ENCODE measurements at regions of chr1 and their contacts with region 1.

Region 1: GRCh38 chr1:86380257-86380861 is 15.8 kb downstream of the ODF2L start:
- DNase-seq: peak; percentile 73
- H3K4me3 Mint-ChIP-seq: no peak overlapping the region
- H3K27ac Mint-ChIP-seq: no peak overlapping the region
- H3K4me1 Mint-ChIP-seq: no peaks in the 10 kb centered on the region
- H3K27me3 Mint-ChIP-seq: no peaks in the 10 kb centered on the region
- CTCF ChIP-seq: peak; percentile 82

Region 2: GRCh38 chr1:86395771-86396497 is 15.6 kb after region 1 on chr1 and contains the start of gene ODF2L:
- CTCF ChIA-PET with region 1: interaction called, 8 read pairs
- POLR2A ChIA-PET with region 1: interaction called, 51 read pairs
- intact Hi-C with region 1: no loop called
- DNase-seq: peak; percentile 90
- H3K4me3 Mint-ChIP-seq: peak within 1 kb of the TSS; percentile 94
- H3K27ac Mint-ChIP-seq: peak within 1 kb of the TSS; percentile 98
- H3K4me1 Mint-ChIP-seq: peaks cover 13% of the 10 kb centered on the region
- H3K27me3 Mint-ChIP-seq: no peaks in the 10 kb centered on the region
- CTCF ChIP-seq: no peak
- total RNA-seq, gene ODF2L: 35.5 and 39.0 TPM in 2 replicates

Region 3: GRCh38 chr1:86429835-86430234 is 49.5 kb after region 1 on chr1:
- CTCF ChIA-PET with region 1: interaction called, 11 read pairs
- POLR2A ChIA-PET with region 1: interaction called, 40 read pairs
- intact Hi-C with region 1: no loop called
- DNase-seq: peak; percentile 96
- H3K4me3 Mint-ChIP-seq: no peak overlapping the region
- H3K27ac Mint-ChIP-seq: no peak overlapping the region
- H3K4me1 Mint-ChIP-seq: peaks cover 13% of the 10 kb centered on the region
- H3K27me3 Mint-ChIP-seq: no peaks in the 10 kb centered on the region
- CTCF ChIP-seq: no peak

Region 4: GRCh38 chr1:86507935-86508582 is 127.7 kb after region 1 on chr1:
- CTCF ChIA-PET with region 1: interaction called, 15 read pairs
- POLR2A ChIA-PET with region 1: no interaction called
- intact Hi-C with region 1: no loop called
- DNase-seq: peak; percentile 40
- H3K4me3 Mint-ChIP-seq: no peak overlapping the region
- H3K27ac Mint-ChIP-seq: no peak overlapping the region
- H3K4me1 Mint-ChIP-seq: no peaks in the 10 kb centered on the region
- H3K27me3 Mint-ChIP-seq: no peaks in the 10 kb centered on the region
- CTCF ChIP-seq: peak; percentile 45

Region 5: GRCh38 chr1:86696522-86696921 is 316.2 kb after region 1 on chr1:
- CTCF ChIA-PET with region 1: no interaction called
- POLR2A ChIA-PET with region 1: interaction called, 3 read pairs
- intact Hi-C with region 1: loop called (anchors 10 kb)
- DNase-seq: no peak
- H3K4me3 Mint-ChIP-seq: no peak overlapping the region
- H3K27ac Mint-ChIP-seq: peak overlapping the region; percentile 32
- H3K4me1 Mint-ChIP-seq: peaks cover 17% of the 10 kb centered on the region
- H3K27me3 Mint-ChIP-seq: no peaks in the 10 kb centered on the region
- CTCF ChIP-seq: no peak